Posterior vena cava (tissue), 2 donors: ENCODE measurements at regions of chr18 and their contacts with region 1.

Region 1: DNA sequence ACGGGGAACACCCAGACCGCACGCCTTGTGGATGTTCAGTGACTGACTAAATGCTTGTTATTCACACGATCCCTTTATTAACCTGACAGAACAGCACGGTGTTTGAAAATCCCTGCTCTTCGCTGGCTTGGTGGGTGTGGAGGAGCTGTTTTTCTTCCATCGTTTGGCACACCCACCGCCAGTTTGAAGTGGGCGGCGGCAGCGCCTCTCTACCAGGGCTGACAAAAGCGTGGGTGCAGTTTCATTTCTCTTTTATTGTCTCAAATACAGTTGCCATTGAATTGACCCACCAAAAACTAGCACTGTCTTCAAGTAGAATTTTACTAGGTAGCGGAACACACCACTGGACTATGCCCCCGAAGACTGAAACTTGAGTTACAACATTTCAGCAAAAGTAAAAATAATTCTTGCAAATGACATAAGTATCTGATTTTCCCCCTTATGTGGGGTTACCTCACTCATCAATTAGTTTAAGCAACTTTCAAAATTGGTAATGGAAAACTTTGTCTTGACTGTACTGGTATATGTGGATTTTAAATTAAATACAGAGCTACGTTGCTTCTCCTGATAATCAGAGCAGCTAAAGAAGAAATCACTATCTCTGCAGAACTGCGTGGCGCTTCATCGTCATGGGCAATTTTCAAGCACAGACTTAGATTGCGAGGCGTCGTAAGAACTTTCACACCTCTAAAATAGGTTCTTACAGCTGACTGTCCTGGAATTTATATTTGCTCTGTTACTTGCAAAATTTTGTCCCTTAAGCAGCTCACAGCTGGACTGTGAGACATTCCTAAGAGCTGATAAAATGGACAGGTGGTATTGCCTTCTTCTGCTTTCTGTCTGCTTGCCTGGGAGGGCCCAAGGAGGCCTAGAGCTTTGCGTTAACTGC is 60.9 kb downstream of the LDLRAD4 start:
- DNase-seq: no peak

Region 2: DNA sequence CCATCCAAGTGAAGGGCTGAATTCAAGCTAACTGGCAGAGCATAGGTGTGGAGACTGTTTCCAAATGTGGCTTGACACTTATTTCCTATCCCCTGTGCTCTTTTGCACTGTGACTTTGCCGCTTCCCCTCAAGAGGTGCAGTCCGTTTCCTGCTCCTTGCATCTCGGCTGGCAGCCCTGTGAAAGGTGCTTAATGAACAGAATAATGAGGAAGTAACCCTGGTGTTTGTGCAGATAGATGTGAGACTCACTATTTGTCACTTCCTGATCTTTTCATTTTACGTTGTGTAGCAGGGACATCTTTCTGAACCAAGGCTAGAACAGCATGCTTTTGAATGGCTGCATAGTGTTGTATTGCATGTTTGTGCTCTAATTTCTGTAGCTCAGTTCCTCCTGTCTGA is 227.5 kb before region 1 on chr18:
- intact Hi-C with region 1: no loop called
- DNase-seq: no peak

Region 3: GRCh38 chr18:13211534-13211933 is 67.9 kb before region 1 on chr18:
- intact Hi-C with region 1: no loop called
- DNase-seq: no peak

Region 4: DNA sequence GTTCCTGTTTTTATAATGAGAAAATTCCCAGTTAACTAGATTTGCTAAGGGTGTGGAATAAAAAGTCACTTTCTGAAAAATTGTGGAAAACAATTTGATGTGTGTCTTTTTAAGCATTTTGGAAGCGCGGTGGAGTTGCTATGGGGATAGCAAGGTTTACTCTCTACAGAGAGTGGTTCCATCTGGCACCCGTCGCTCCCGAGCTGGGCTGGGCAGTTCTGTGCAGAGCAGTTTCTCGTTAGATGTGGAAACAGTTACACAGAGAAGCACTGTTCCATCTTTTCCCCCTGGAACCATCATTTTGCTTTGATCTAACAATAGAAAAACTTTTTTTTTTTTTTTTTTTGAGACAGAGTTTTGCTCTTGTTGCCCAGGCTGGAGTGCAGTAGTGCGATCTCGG is 43.4 kb before region 1 on chr18:
- intact Hi-C with region 1: loop called in 1 of 2 experiments (anchors 10 kb)
- DNase-seq: peak; percentile 94